AG04449 (cell line): ENCODE measurements at regions of chr14 and their contacts with region 1.

Region 1: DNA sequence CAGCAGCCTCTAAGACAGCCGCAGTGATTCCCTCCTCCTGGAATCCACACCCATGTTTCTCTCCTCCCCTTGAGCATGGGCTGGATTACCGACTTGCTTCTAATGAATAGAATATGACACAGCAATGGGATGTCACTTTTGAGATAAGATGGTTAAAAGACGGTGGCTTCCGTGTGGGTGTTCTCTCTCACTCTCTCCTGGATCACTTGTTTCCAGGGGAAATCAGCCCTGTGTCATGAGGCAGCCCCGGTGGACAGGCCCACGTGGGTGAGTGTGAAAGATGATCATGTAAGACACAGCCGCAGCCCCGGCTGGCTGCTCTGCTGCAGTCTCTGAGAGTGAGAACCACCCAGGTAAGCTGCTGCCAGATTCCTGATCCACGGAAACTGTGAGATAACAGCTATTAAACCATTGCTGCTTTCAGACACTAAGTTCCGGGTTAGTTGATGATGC is 10.7 kb downstream of the MOAP1 start:
- DNase-seq: no peak
- H3K4me3 ChIP-seq: no peak overlapping the region
- CTCF ChIP-seq: no peak

Region 2: GRCh38 chr14:93146119-93146518 is 27.9 kb before region 1 on chr14:
- CTCF ChIA-PET with region 1: no interaction called
- POLR2A ChIA-PET with region 1: no interaction called
- DNase-seq: no peak
- H3K4me3 ChIP-seq: no peak overlapping the region
- CTCF ChIP-seq: no peak

Region 3: GRCh38 chr14:93160353-93160801 is 13.6 kb before region 1 on chr14:
- CTCF ChIA-PET with region 1: interaction called, 46 read pairs
- POLR2A ChIA-PET with region 1: no interaction called
- DNase-seq: no peak
- H3K4me3 ChIP-seq: no peak overlapping the region
- CTCF ChIP-seq: peak; percentile 37

Region 4: DNA sequence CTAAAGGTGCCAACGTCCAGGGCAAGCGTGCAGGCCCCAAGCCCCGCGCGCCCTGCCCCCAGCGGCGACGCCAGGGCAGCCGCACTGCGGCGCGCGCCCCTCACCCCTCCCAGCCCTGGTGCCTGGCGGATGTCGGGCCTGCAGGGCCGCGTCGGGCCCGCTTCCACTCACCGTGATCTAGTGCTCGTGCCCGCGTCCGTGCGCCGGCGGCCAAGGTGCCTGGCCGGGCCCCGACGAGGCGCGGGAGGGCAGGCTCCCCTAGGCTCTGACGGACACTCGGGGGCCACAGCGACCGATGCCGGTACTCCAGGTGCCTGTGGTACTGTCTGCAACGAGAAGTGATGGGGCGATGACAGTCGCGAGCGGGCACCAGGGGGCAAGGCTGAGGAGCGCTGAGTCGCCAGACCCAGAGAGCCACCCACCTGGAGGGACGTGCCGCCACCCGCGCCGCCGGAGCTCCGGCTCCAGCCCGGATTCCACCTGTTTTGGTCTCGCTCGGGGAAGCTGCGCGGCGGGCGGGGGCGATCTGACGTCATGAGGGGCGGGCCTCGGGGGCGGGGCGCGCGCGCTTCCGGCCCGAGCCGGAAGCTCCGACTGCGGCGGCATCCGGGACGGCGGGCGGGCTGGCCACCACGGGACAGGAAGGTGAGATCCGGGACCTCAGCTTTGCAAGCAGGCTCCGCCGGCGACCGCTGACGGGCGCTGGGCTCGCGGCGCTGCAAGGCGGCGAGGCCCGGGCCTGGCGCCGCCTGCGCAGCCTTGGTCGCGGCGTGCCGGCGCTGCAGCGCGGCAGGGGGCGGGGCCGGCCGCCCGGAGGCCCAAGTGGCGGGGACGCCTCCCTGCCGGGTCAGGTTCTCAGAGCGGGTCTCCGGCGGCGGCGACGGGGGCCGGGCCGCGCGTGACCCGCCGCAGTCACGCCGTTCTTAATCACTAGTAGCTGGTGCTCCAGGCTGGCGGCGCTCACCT is 10.7 kb after region 1 on chr14 and contains the starts of genes LYSET and MOAP1:
- CTCF ChIA-PET with region 1: interaction called, 12 read pairs
- POLR2A ChIA-PET with region 1: interaction called, 3 read pairs
- DNase-seq: no peak
- H3K4me3 ChIP-seq: peak within 1 kb of the TSS; percentile 96
- CTCF ChIP-seq: peak; percentile 6

Region 5: DNA sequence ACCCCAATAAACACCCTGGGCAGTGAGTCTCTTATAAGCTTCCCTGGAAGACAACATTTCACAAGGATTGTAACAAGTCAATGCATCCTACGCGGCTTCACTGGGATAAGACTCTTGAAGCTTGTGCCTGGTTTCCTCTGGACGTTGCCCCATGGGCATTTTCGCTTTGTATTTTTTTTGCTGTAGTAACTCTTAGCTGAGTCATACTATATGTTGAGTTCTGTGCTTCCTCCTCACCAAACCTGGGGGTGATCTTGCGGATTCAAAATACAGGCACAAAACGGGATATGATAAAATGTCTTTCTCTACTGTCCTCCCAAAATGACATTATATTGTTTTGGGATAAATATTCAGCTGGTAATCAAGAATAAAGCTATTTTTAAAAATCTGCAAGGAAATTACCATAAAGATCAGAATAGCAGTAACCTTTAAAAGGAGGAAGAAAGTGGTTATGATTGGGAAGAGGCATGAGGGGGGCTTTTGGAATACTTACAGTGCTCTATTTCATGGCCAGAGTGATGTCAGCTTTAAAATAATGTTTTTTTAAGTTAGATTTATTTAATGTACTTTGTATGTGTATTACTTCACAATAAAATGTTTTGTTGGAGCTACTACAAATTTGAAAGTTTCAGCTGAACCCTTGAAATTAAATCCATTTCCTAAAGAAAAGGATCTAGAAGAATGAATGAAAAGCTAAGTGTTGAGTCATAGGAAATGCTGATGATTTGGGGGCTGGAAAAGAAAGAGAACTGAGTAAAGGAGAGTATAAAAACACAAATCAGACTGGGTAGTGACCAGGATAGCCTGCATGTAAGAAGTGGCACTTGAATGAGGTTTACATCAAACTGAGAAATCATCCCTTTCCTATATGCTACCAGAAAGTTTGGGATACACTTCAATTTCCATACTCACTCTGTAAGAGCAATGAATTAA is 144.2 kb after region 1 on chr14:
- CTCF ChIA-PET with region 1: no interaction called
- POLR2A ChIA-PET with region 1: no interaction called
- DNase-seq: no peak
- H3K4me3 ChIP-seq: no peak overlapping the region
- CTCF ChIP-seq: no peak